IMR-90 (cell line): ENCODE measurements at regions of chr7 and their contacts with region 1.

Region 1: GRCh38 chr7:80499350-80499953 is 12.4 kb downstream of the GNAT3 start:
- DNase-seq: peak; percentile 95
- ATAC-seq: peak; percentile 98
- H3K4me3 ChIP-seq: no peak overlapping the region
- H3K27ac ChIP-seq: no peak overlapping the region
- H3K4me1 ChIP-seq: peaks cover 2% of the 10 kb centered on the region; the same call in 1 of the 2 replicates
- H3K27me3 ChIP-seq: no peaks in the 10 kb centered on the region
- CTCF ChIP-seq: no peak
- POLR2A ChIP-seq: no peak
- RAD21 ChIP-seq: no peak

Region 2: DNA sequence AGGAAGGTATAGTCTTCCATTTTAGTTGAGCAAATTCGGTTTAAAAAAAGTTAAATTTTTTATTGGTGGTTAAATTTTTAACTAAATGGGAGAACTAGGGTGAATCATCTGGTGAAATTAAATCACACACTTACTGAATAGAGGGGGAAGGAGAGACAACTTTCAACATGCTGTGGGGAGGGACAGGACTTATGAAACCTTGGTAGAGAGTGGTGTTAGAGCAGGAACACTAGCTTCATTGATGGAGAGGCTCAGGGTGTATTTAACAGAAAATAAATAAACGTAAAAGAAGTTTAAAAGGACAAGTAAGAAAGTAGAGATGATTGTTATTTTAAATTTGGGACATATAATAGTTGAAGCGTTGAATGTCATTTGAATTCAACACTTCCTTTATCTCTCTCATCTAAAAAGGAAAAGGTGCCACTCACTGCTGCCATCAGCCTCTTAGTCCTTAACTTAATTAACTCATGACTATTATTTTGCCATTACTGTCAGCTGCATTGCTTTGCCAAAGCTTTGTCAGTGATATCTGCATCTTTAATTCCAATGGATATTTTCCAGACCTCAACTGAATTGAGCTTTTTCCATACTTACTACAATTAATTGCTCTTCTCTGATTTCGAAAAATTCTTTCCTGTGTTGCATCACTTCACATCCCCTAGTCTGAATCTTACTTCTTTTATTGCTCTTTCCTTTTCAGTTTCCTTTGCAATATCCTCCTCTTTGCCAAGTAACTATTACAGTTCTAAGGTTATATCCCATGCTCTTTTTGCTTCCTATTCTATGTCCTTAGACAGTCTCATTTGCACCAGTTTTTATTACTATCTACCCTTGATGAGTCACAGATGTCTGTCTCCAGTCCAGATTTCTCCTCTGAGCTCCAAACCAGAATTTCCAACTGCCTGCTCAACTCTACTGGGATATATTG is 59.3 kb before region 1 on chr7:
- CTCF ChIA-PET with region 1: no interaction called
- POLR2A ChIA-PET with region 1: no interaction called
- dilution Hi-C with region 1: no loop called
- in situ Hi-C with region 1: no loop called
- intact Hi-C with region 1: loop called (anchors 10 kb)
- DNase-seq: peak; percentile 69
- ATAC-seq: peak; percentile 65
- H3K4me3 ChIP-seq: no peak overlapping the region
- H3K27ac ChIP-seq: no peak overlapping the region
- H3K4me1 ChIP-seq: peaks cover 2% of the 10 kb centered on the region; the same call in 1 of the 2 replicates
- H3K27me3 ChIP-seq: no peaks in the 10 kb centered on the region
- CTCF ChIP-seq: no peak
- POLR2A ChIP-seq: no peak
- RAD21 ChIP-seq: no peak

Region 3: DNA sequence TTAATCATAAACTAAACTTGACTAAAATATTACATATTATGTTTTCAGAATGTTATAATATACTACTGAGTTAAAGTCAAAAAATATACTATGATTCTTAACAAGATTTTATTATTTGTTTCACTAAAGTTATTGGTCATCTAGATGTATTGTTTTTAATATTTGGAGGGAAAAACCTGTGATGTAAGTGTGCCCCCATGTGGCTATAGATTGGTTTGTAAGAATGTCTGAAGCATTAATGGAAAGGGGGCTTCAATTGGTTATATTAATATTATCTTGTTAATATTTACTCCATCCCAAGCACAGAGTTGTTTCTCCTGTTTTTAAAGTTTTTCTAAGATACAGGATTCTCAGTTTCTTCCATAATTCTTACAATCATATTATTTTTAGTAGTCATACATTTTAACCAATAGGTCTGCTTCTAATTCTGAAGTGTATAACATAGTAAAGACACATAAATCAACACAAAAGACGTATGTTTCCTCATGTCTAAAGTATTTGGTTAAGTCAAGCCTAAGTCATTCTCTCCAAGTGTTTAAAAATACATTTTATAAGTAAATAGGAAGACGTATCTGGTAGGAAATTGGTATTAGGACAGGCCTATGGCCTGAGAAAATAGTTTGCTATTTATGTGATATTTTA is 45.6 kb before region 1 on chr7:
- CTCF ChIA-PET with region 1: no interaction called
- POLR2A ChIA-PET with region 1: no interaction called
- dilution Hi-C with region 1: no loop called
- in situ Hi-C with region 1: no loop called
- intact Hi-C with region 1: loop called (anchors 2 kb)
- DNase-seq: peak; percentile 56
- ATAC-seq: peak; percentile 48; the same call in 1 of the 2 replicates
- H3K4me3 ChIP-seq: no peak overlapping the region
- H3K27ac ChIP-seq: no peak overlapping the region
- H3K4me1 ChIP-seq: peaks cover 7% of the 10 kb centered on the region; the same call in 1 of the 2 replicates
- H3K27me3 ChIP-seq: no peaks in the 10 kb centered on the region
- CTCF ChIP-seq: peak; percentile 59
- POLR2A ChIP-seq: no peak
- RAD21 ChIP-seq: peak; percentile 71